ENCODE measurements at regions of chr5 and their contacts with region 1.

Region 1: DNA sequence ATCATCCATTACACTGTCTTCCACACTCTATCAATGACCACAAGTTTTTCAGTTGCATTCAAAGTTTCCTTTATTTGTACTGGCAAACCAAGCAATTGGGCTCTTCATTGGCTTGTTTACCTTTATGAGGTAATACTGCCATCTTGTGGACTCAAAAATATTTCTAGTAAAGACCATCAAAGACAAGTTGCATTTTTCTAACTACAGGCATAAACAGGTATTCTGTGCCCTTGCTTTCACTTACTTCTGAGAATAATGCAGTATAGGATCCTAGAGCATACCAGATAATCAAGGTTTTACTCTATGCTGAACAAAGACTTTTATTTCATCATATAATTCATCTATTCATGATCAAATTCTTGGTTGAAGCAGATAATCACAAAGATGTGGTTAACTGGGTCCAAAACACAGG is 173.7 kb upstream of the POU5F2 start:
- DNase-seq: no peak
- H3K4me3 Mint-ChIP-seq: no peak overlapping the region
- H3K27ac Mint-ChIP-seq: no peak overlapping the region
- H3K4me1 Mint-ChIP-seq: no peaks in the 10 kb centered on the region
- H3K27me3 Mint-ChIP-seq: no peaks in the 10 kb centered on the region

Region 2: DNA sequence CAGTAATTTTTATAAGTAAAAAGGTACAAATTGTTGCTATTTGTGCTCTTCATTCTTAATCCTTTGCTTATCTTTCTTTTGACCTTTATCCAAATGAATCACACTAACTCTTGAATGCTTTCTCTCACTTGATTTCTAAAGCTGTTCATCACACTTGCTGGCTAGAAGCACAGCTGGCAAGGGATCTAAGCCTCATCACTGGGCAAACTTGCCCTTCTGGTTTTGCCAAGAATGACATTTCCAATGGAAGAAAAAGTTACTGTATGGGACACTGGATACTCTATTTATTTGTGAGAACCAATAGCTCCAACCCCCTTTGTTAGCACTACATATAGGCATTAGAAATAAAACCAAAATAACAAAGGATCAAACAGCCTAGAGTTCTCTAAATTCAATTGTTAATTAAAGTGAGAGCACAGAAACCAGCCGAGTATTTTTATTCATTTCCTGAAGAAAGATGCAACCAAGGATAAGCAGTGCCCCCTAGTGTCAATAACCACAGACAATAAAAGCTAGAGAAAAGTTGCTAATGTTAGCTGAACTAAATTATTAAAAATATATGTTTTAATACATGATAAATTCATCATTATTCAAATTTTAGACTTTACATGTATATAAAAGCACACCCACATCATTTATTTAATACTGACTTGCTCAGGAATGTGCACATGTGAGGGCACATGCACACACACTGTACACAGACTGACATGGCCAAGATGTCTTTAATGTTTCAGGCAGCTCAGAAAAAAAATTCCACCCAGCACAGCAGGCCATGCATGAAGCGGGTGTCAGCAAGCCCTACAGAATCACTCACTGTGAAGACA is 113.9 kb before region 1 on chr5:
- intact Hi-C with region 1: loop called (anchors 5 kb)
- DNase-seq: peak; percentile 75
- H3K4me3 Mint-ChIP-seq: no peak overlapping the region
- H3K27ac Mint-ChIP-seq: no peak overlapping the region
- H3K4me1 Mint-ChIP-seq: peaks cover 3% of the 10 kb centered on the region
- H3K27me3 Mint-ChIP-seq: no peaks in the 10 kb centered on the region